Thyroid gland (tissue), 4 donors: ENCODE measurements at regions of chr9 and their contacts with region 1.

Region 1: DNA sequence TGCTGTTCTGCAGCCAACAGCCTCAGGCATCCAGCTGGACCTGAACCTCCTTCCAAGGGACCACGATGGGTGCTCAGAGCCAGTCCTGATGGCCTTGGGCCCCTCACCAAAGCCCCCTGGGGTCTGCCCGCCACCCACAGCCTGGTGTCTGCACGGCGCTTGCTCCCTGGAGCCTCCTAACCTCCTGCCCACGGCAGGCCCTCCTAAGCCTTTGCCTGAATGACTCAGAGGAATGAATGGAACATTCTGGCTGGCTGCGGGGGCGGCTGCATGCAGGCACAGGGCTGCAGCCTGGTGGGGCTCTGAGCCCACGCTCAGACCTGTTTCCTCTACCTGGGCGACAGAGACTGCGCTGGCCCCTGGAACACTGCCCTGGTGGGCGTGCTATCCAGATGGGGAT is 6.9 kb downstream of the SOHLH1 start:
- DNase-seq: peak in 1 of 2 donors; percentile 10
- H3K4me3 ChIP-seq: no peak overlapping the region
- H3K27ac ChIP-seq: no peak overlapping the region
- H3K4me1 ChIP-seq: no peaks in the 10 kb centered on the region
- H3K27me3 ChIP-seq: no peaks in the 10 kb centered on the region
- CTCF ChIP-seq: no peak
- POLR2A ChIP-seq: no peak

Region 2: DNA sequence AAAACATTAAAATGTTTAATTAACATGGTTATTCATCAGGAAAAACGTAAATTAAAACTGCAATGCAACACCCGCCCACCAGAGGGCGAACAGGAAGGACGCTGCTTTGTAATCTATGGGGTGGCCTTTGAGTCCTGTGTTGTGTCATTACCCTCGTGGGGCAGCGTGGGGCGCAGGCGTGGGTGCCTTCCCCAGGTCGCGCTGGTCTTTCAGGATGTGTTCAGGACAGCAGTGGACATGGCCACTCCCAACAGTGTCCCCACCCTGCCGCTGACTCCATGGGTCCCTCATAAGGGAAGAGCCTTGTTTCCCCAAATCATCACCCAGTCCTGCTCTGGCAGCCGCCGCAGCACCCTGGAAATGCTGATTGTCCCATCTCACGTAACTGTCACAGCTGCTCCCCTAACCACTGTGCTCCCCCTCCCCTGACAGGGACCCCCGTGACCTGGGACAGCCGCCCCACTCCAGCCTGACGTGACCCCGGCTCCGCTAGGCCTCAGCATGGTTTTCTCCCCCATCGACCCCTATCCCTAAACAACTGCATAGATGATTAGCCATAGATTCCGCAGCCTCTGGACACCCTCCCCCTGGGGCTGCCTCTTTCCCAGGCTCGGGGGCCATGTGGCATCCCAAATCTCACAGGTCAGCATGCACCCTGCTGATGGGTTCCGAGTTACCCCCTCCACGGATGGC is 89.5 kb before region 1 on chr9:
- intact Hi-C with region 1: loop called (anchors 10 kb)
- DNase-seq: peak; percentile 19 to 40
- H3K4me3 ChIP-seq: no peak overlapping the region
- H3K27ac ChIP-seq: no peak overlapping the region
- H3K4me1 ChIP-seq: peaks cover 15 to 20% of the 10 kb centered on the region in 2 donors
- H3K27me3 ChIP-seq: no peaks in the 10 kb centered on the region
- CTCF ChIP-seq: peak; percentile 49 to 77 (median 68)
- POLR2A ChIP-seq: no peak

Region 3: GRCh38 chr9:135797507-135798262 is 105.3 kb after region 1 on chr9:
- intact Hi-C with region 1: no loop called
- DNase-seq: no peak
- H3K4me3 ChIP-seq: no peak overlapping the region
- H3K27ac ChIP-seq: no peak overlapping the region
- H3K4me1 ChIP-seq: no peaks in the 10 kb centered on the region
- H3K27me3 ChIP-seq: no peaks in the 10 kb centered on the region
- CTCF ChIP-seq: peak in 3 of 6 experiments; percentile 14 to 39 (median 24)
- POLR2A ChIP-seq: no peak